Dendritic cell treated with granulocyte-macrophage colony-stimulating factor and Interleukin-4, amounts not matched to agents 40 ng/mL and 50 ng/mL, for 4 days (primary cell): ENCODE measurements at regions of chr6 and their contacts with region 1.

Region 1: GRCh38 chr6:97059473-97059872 is 134.9 kb downstream of the KLHL32 start:
- H3K4me3 Mint-ChIP-seq: no peak overlapping the region
- H3K27ac Mint-ChIP-seq: no peak overlapping the region
- H3K4me1 Mint-ChIP-seq: no peaks in the 10 kb centered on the region
- H3K27me3 Mint-ChIP-seq: peaks cover 4% of the 10 kb centered on the region

Region 2: DNA sequence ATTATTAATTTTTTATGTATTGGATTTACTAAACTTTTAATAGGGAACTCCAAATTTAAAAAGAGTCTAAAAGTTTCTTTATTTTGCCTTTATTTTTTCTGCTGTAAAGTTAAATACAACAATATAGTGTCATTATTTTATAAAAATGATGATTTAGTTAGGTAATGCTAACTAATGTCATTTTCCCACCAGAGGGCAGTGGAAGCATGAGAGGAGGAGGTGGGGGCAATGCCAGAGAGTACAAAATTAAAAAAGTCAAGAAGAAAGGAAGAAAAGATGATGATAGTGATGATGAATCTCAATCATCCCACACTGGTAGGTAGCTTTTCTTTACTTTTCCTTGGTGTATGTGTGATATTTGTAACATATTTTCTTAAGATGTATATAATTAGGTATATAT is 516.8 kb before region 1 on chr6:
- intact Hi-C with region 1: loop called (anchors 5 kb)
- H3K4me3 Mint-ChIP-seq: no peak overlapping the region
- H3K27ac Mint-ChIP-seq: no peak overlapping the region
- H3K4me1 Mint-ChIP-seq: no peaks in the 10 kb centered on the region
- H3K27me3 Mint-ChIP-seq: no peaks in the 10 kb centered on the region

Region 3: DNA sequence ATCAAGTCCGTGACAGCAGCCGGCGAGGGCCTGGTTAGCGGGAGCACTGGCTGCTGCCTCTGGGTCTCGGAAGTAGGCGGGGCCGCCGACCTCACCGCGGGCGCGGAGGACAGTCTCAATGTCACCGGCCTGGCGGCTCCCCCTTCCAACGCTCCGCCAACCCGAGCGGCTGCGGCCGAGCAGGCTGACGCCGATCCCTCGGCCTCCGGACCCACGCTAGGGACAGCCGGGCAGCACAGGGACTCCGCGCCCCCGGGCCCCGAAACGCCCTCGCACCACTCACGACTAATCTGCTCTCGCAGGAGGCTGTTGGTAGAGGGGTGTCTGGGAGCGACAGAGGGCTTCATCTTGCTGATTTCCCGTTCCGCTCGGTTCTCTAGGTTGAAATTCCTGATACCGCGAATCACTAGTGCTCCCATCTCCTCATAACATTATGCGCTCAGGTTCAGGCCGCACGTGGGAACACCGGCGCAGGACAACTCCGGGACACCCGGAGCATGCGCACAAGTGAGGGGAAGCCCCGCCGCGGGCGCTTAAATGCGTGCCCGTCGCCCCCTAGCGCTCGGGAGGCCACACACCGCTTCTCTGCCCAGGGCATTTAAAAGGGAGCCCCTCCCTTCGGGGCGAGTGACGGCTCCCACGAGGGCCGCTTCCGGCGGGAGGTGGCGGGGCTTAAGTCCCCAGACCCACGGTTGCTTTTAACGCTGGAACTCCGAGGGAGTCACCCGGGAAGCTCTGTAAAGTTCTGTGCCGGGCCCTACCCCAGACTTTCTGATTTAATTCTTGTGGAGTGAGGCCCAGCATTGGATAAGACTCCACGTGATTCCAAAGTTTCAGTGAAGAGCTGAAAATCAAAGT is 161.9 kb before region 1 on chr6 and contains the start of gene NDUFAF4:
- intact Hi-C with region 1: loop called (anchors 1 kb)
- H3K4me3 Mint-ChIP-seq: peak within 1 kb of the TSS; percentile 91
- H3K27ac Mint-ChIP-seq: peak within 1 kb of the TSS; percentile 97
- H3K4me1 Mint-ChIP-seq: peaks cover 21% of the 10 kb centered on the region
- H3K27me3 Mint-ChIP-seq: peaks cover 4% of the 10 kb centered on the region

Region 4: DNA sequence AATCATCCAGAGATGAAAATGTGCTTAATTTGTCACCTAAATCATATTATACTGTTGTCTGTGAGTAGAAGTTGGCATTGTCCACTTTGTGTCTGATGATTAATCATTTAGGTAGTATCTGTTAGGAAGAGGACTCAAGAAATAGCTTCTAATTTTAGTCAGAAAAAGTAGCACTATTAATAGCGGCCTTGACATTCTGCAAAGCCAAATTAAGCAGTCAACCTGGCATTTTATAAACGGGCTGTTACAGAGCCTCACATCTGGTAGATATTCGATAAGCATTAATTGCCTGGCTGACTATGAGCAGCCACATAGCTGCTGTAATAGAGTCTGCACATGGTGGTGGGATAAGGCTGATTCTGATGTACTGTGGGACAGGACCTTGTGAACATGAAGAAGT is 35.5 kb before region 1 on chr6:
- intact Hi-C with region 1: no loop called
- H3K4me3 Mint-ChIP-seq: no peak overlapping the region
- H3K27ac Mint-ChIP-seq: no peak overlapping the region
- H3K4me1 Mint-ChIP-seq: no peaks in the 10 kb centered on the region
- H3K27me3 Mint-ChIP-seq: no peaks in the 10 kb centered on the region